Activated CD4-positive, alpha-beta T cell treated with anti-CD3 and anti-CD28 coated beads for 36 hours (primary cell): ENCODE measurements at regions of chr2 and their contacts with region 1.

Region 1: GRCh38 chr2:231612179-231613053 is 19.8 kb downstream of the TEX44 start:
- DNase-seq: peak; percentile 99
- ATAC-seq: peak; percentile 67
- H3K4me3 Mint-ChIP-seq: peak overlapping the region; percentile 77
- H3K27ac Mint-ChIP-seq: peak overlapping the region; percentile 98
- H3K4me1 Mint-ChIP-seq: peaks cover 52% of the 10 kb centered on the region
- H3K27me3 Mint-ChIP-seq: no peaks in the 10 kb centered on the region

Region 2: GRCh38 chr2:231514103-231514950 is 98.1 kb before region 1 on chr2:
- CTCF ChIA-PET with region 1: interaction called, 3 read pairs
- POLR2A ChIA-PET with region 1: interaction called, 7 read pairs
- intact Hi-C with region 1: loop called in 1 of 2 experiments (anchors 1 kb)
- DNase-seq: peak; percentile 99
- ATAC-seq: peak; percentile 99
- H3K4me3 Mint-ChIP-seq: peak overlapping the region; percentile 83
- H3K27ac Mint-ChIP-seq: peak overlapping the region; percentile 95
- H3K4me1 Mint-ChIP-seq: peaks cover 13% of the 10 kb centered on the region
- H3K27me3 Mint-ChIP-seq: no peaks in the 10 kb centered on the region

Region 3: GRCh38 chr2:231674587-231675338 is 62.3 kb after region 1 on chr2:
- CTCF ChIA-PET with region 1: interaction called, 107 read pairs
- POLR2A ChIA-PET with region 1: interaction called, 22 read pairs
- intact Hi-C with region 1: loop called (anchors 1 kb)
- DNase-seq: peak; percentile 81
- ATAC-seq: peak; percentile 84
- H3K4me3 Mint-ChIP-seq: no peak overlapping the region
- H3K27ac Mint-ChIP-seq: no peak overlapping the region
- H3K4me1 Mint-ChIP-seq: peaks cover 10% of the 10 kb centered on the region
- H3K27me3 Mint-ChIP-seq: no peaks in the 10 kb centered on the region

Region 4: DNA sequence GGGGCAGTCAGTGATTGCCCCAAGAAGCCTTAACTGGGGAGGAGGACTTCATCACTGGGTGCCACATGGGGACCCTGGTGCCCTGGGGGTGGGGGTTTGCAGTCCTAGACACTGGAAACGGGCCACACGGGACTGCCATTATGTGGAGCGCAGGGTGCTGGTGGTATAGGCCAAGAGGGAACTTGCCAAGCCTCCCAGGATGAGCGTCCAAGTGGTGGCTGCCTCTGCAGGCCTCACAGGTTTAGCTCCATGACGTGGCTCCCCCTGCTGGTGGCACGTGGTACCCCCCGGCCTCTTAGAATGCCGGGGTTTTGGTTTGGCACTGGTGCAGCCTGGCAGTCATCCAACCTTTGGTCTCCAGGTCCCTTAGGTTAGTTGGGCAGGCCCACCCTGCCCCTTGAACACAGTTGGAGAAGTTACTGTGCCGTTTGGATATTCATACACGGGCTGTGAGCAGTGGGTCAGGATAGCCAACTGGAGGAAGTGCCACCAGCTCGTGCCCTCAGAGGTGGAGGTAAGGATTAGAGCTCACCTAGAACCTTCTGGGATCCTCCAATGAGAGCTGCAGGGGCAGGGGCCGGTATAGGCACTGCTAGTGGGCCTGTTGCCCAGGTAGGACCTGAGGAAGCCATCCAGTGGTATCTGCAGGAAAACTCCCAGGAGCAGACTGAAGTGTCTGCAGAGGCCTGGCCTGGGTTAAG is 101.5 kb after region 1 on chr2:
- CTCF ChIA-PET with region 1: interaction called, 161 read pairs
- POLR2A ChIA-PET with region 1: interaction called, 104 read pairs
- intact Hi-C with region 1: loop called (anchors 1 kb)
- DNase-seq: peak; percentile 96
- ATAC-seq: peak; percentile 45
- H3K4me3 Mint-ChIP-seq: peak overlapping the region; percentile 44
- H3K27ac Mint-ChIP-seq: peak overlapping the region; percentile 93
- H3K4me1 Mint-ChIP-seq: peaks cover 37% of the 10 kb centered on the region
- H3K27me3 Mint-ChIP-seq: no peaks in the 10 kb centered on the region

Region 5: GRCh38 chr2:231961349-231962166 is 349.1 kb after region 1 on chr2 and contains the start of gene DIS3L2:
- CTCF ChIA-PET with region 1: interaction called, 3 read pairs
- POLR2A ChIA-PET with region 1: no interaction called
- intact Hi-C with region 1: loop called in 1 of 2 experiments (anchors 5 kb)
- DNase-seq: peak; percentile 91
- ATAC-seq: peak; percentile 94
- H3K4me3 Mint-ChIP-seq: peak within 1 kb of the TSS; percentile 90
- H3K27ac Mint-ChIP-seq: peak within 1 kb of the TSS; percentile 96
- H3K4me1 Mint-ChIP-seq: peaks cover 41% of the 10 kb centered on the region
- H3K27me3 Mint-ChIP-seq: peaks cover under 1% of the 10 kb centered on the region
- total RNA-seq, gene DIS3L2: 25.6 to 34.5 TPM